ENCODE measurements at regions of chr16 and their contacts with region 1.

Region 1: GRCh38 chr16:4330277-4330874 is 14.5 kb downstream of the GLIS2 start:
- DNase-seq: peak; percentile 49 to 84 (median 75)
- ATAC-seq: peak; percentile 68
- H3K4me3 ChIP-seq: no peak overlapping the region
- H3K4me3 Mint-ChIP-seq: no peak overlapping the region
- H3K27ac ChIP-seq: no peak overlapping the region
- H3K27ac Mint-ChIP-seq: no peak overlapping the region
- H3K4me1 ChIP-seq: peaks cover 14% of the 10 kb centered on the region
- H3K4me1 Mint-ChIP-seq: peaks cover 5% of the 10 kb centered on the region
- H3K27me3 ChIP-seq: no peaks in the 10 kb centered on the region
- H3K27me3 Mint-ChIP-seq: no peaks in the 10 kb centered on the region
- CTCF ChIP-seq: peak; percentile 91

Region 2: DNA sequence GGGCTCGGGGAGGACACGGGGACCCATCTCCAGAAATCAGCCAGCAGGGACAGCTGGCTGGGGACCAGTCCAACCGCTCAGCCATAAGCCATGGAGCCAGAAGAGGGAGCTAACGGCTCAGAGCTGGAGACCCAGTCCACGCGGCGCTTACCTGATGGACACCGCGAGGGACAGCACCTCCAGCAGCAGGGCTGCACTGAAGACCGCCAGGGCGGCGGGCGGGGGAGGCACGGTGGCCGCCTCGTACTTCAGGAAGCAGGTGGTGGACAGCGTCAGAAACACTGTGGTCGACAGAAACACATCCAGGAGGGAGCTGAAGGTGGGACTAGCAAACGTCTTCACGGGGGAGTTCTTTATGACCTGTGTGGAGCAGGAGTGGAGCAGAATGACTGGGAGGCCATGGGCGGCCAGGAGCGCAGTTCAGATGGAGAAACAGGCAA is 347.3 kb before region 1 on chr16:
- CTCF ChIA-PET with region 1: interaction called, 9 read pairs
- POLR2A ChIA-PET with region 1: no interaction called
- intact Hi-C with region 1: loop called in 1 of 2 experiments (anchors 1 kb)
- DNase-seq: peak in 8 of 9 experiments; percentile 9 to 68 (median 48)
- ATAC-seq: peak; percentile 48
- H3K4me3 ChIP-seq: no peak overlapping the region
- H3K4me3 Mint-ChIP-seq: no peak overlapping the region
- H3K27ac ChIP-seq: no peak overlapping the region
- H3K27ac Mint-ChIP-seq: no peak overlapping the region
- H3K4me1 ChIP-seq: peaks cover 4% of the 10 kb centered on the region
- H3K4me1 Mint-ChIP-seq: peaks cover 4% of the 10 kb centered on the region
- H3K27me3 ChIP-seq: no peaks in the 10 kb centered on the region
- H3K27me3 Mint-ChIP-seq: no peaks in the 10 kb centered on the region
- CTCF ChIP-seq: peak; percentile 31

Region 3: DNA sequence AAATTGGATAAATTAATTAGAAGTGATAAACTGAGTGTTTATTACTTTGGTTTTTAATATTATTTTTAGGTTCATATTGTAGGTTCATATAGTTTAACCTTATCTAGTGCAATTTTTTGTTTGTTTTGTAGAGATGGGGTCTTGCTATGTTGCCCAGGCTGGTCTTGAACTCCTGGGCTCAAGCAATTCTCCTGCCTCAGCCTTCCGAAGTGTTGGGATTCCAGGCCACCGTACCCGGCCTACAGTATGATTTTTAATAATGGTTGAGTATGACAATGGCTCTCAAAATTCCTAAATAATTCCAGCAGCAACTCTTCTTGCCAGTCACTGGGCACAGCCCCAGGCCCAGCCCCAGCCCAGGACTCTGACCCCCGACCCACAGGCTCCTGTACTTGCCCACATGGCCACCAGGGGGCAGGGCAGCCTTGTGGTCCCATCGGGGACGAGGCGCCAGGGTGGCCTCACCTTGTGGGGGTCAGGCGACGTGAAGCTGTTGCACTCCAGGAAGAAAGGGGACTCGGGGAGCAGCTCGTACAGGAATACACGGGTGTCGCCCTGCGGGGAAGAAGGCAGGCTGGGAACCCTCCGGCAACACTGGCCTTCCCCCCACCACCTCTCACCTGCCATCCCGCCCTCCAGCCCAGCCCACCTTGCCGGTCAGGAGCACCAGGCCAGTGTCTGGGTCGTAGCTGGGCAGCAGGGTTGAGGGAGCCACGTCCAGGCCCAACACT is 28.6 kb after region 1 on chr16:
- CTCF ChIA-PET with region 1: no interaction called
- POLR2A ChIA-PET with region 1: no interaction called
- intact Hi-C with region 1: no loop called
- DNase-seq: peak; percentile 49 to 83 (median 70)
- ATAC-seq: peak; percentile 72
- H3K4me3 ChIP-seq: no peak overlapping the region
- H3K4me3 Mint-ChIP-seq: no peak overlapping the region
- H3K27ac ChIP-seq: peak overlapping the region in 1 of 2 experiments; percentile 25
- H3K27ac Mint-ChIP-seq: no peak overlapping the region
- H3K4me1 ChIP-seq: no peaks in the 10 kb centered on the region
- H3K4me1 Mint-ChIP-seq: no peaks in the 10 kb centered on the region
- H3K27me3 ChIP-seq: no peaks in the 10 kb centered on the region
- H3K27me3 Mint-ChIP-seq: no peaks in the 10 kb centered on the region
- CTCF ChIP-seq: peak; percentile 96

Region 4: DNA sequence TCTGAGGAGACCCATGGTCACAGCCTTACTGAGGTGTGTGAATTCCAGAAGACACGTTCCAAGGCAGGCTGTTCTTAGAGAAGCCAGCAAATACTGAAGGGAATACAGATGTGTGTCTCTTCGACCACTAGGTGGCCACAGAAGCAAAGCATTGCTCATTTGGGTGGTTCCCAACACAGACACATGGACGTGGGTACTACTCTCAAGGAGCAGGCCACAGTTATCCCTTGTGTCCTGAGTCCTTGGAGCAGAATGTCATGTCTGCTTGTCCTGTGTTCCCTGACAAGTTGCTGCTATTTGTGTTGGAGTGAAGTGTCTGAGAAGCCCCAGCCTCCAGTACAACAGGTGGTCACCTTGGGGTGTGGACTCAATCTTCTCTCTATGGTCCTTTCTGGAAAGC is 176.1 kb after region 1 on chr16:
- CTCF ChIA-PET with region 1: no interaction called
- POLR2A ChIA-PET with region 1: no interaction called
- intact Hi-C with region 1: no loop called
- DNase-seq: peak; percentile 28 to 88 (median 60)
- ATAC-seq: peak; percentile 34
- H3K4me3 ChIP-seq: no peak overlapping the region
- H3K4me3 Mint-ChIP-seq: peak overlapping the region; percentile 65
- H3K27ac ChIP-seq: peak overlapping the region; percentile 85 to 88
- H3K27ac Mint-ChIP-seq: peak overlapping the region; percentile 98
- H3K4me1 ChIP-seq: peaks cover 58% of the 10 kb centered on the region
- H3K4me1 Mint-ChIP-seq: peaks cover 59% of the 10 kb centered on the region
- H3K27me3 ChIP-seq: no peaks in the 10 kb centered on the region
- H3K27me3 Mint-ChIP-seq: no peaks in the 10 kb centered on the region
- CTCF ChIP-seq: peak; percentile 88

Measured in CD8-positive, alpha-beta T cell (primary cell).